Right ventricle myocardium inferior (tissue), 1 donor: ENCODE measurements at regions of chr5 and their contacts with region 1.

Region 1: DNA sequence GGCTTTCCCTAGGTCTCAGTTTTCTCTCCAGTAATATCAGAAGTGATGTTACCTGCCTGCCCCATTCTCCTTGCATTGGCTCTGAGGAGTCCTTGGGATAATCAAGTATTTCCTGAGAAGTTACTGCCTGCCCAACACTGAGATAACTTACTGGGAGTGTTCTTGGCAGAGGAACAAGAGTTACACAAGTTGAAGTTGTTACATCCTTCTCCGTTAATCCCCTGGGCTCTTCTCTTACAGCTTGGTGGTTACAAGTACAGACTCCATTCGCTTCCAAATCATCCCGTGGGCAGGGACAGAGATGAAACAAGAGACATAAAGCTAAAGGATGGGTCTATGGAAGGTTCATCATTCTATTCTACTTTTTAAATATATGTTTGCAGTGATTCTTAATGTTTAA is 74.1 kb upstream of the SAP30L start:
- DNase-seq: no peak
- ATAC-seq: peak; percentile 81

Region 2: DNA sequence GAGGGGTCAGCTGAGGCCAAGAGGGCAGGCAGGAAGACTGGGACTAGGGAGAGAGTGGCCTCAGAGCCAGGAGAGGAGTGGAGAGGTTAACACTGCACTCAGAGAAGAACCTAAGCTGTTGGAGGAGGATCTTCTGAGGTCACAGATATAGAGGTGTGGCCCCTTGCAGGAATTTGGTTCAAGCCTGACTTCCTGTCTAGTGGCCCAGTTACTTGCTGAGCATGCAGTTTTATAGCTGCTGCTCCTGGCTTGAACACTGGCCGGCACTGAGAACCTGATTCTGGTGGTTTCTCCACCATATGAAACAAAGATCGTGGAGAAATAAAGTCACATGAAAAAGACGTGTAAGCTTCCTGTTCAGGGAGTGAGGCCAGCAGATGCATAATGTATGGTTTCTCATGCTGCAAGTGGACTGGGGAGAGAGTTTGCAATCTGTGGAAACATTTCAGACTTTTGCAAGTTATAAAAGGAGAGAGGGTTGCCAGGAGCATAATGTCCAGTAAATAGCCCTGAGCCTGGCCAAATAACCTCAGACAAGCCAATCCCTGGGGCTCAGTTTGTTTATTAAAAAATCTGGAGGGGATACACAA is 98.6 kb before region 1 on chr5:
- intact Hi-C with region 1: loop called (anchors 10 kb)
- DNase-seq: no peak
- ATAC-seq: peak; percentile 75